SK-N-SH (cell line): ENCODE measurements at regions of chr3 and their contacts with region 1.

Region 1: DNA sequence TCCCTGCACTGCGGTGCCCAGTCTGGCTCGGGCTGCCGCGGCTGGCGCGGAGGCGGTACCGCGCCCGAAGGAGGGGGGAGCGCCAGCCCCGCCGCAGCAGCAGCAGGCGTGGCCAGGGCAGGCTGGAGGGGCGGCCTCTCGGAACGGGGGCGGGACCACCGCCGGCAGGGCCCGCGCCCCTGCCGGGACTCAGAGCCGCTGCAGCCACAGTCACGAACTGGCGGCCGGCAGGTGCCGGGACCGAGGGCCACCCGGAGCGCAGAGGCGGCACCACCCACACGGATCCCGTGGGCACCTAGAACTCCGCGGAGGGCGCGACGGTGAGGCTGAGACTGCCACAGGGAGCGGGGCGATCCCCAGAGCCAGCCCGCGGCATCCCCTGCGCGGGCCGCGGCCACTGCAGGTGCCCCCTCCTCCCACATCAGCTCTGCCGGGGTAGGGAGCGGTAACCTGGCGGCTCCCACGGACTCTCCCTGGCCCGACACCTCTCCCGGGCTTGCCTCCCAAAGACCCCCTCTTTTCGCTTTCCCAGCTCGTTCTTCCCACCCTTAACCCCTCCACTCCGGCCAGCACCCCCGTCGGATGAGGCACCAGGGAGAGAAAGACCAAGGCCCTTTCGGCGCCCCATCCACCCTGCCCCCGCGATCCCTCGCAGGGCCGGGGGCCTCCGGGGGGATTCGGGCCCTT is at the start of gene VWA5B2:
- DNase-seq: peak; percentile 99
- H3K4me3 ChIP-seq: peak within 1 kb of the TSS; percentile 50 to 64
- H3K27ac ChIP-seq: no peak within 1 kb of the TSS
- H3K4me1 ChIP-seq: peaks cover 0 to 26% of the 10 kb centered on the region in 2 experiments; a peak in 2 of 4 replicates
- H3K27me3 ChIP-seq: peaks cover 27% of the 10 kb centered on the region
- CTCF ChIP-seq: peak; percentile 21; the same call in 1 of the 2 replicates
- EP300 ChIP-seq: no peak
- RAD21 ChIP-seq: 0 out of 2 replicates have a peak, but pooled peaks have one; percentile 16
- polyA plus RNA-seq, gene VWA5B2: 0.08 and 0.19 TPM in 2 replicates

Region 2: DNA sequence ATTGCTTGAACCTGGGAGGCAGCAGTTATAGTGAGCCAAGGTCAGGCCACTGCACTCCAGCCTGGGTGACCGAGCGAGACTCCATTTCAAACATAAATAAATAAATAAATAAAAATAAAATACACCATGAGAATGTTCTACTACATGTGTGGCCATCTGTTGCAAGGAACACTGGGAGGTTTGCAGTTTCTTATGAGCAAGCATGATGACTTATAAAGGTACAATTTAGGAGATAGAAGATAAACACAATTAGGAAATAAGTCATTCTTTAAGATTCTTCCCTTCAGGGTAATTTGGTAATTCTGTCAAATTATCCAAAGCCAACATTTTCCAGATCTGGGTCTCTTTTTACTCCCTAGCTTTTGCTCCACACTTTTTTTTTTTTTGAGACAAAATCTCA is 163.3 kb before region 1 on chr3:
- CTCF ChIA-PET with region 1: no interaction called
- POLR2A ChIA-PET with region 1: no interaction called
- DNase-seq: no peak
- H3K4me3 ChIP-seq: no peak overlapping the region
- H3K27ac ChIP-seq: no peak overlapping the region
- H3K4me1 ChIP-seq: no peaks in the 10 kb centered on the region; a peak in 1 of 4 replicates
- H3K27me3 ChIP-seq: no peaks in the 10 kb centered on the region
- CTCF ChIP-seq: no peak
- EP300 ChIP-seq: no peak
- RAD21 ChIP-seq: no peak

Region 3: DNA sequence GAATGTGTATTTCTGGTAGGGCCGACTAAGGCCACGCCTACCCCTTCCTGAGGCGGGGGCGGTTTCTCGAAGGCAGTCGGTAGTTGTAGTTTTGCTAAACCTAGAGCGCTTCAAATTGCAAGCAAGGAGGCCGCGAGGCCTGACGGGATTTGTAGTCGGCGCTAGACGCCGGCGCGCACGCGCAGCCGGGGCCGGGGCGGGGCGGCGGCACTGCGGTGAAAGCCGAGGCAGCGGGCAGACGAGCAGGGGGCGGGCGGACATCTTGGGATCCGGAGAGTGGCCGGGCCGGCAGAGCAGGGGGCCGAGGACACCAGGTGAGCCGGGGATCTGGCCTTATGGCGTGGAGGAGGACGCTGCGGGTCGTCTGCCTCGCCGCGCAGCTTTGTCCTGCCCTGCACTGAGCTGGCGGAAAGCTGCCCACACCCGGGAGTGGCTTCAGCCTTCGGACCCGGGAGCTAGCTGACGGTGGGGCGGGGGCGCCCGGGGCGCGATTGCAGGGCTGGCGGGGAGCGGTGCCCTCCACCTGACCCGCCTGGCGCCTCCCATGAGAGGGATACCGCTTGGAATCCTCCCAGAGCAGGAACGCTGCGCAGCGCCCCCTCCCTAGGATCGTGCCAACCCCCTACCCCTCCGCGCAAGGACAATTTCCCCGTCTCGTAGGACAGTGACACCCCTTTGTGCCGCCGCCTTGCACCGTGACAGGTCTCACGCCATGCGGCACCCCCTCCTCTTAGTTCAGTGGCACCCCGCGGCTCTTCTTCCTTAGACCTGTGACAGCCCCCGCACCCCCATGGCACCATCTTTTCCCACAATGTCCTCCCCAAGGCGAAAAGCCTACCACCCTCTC is 54.7 kb before region 1 on chr3 and contains the start of gene AP2M1:
- CTCF ChIA-PET with region 1: interaction called, 11 read pairs
- POLR2A ChIA-PET with region 1: no interaction called
- DNase-seq: peak; percentile 95
- H3K4me3 ChIP-seq: peak within 1 kb of the TSS; percentile 93 to 96
- H3K27ac ChIP-seq: peak within 1 kb of the TSS; percentile 86 to 87
- H3K4me1 ChIP-seq: peaks cover 25 to 29% of the 10 kb centered on the region in 2 experiments
- H3K27me3 ChIP-seq: no peaks in the 10 kb centered on the region
- CTCF ChIP-seq: peak; percentile 25; the same call in 1 of the 2 replicates
- EP300 ChIP-seq: no peak
- RAD21 ChIP-seq: peak; percentile 7
- polyA plus RNA-seq, gene AP2M1: 645 and 759 TPM in 2 replicates

Region 4: DNA sequence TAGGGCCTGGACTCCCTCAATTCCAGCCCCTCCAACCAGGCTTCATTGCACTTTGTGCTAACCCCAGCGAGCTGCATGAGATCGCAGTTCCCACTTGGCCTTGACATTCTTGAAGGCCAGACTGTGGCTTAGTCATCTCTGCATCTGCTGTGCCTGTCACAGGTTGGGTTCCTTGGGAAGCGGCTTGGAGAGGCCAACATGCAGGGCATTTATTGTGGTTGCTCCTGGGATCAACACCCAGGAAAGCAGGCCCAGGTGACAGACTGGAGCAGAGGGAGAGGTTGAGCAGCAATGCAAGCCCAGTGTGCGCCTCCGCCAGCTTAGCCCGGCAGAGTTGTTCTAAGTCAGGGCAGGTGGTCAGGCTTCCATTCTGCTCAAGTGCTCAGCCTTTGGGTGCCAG is 33.0 kb before region 1 on chr3:
- CTCF ChIA-PET with region 1: interaction called, 15 read pairs
- POLR2A ChIA-PET with region 1: no interaction called
- DNase-seq: no peak
- H3K4me3 ChIP-seq: no peak overlapping the region
- H3K27ac ChIP-seq: no peak overlapping the region
- H3K4me1 ChIP-seq: no peaks in the 10 kb centered on the region
- H3K27me3 ChIP-seq: no peaks in the 10 kb centered on the region
- CTCF ChIP-seq: no peak
- EP300 ChIP-seq: no peak
- RAD21 ChIP-seq: no peak

Region 5: GRCh38 chr3:184209146-184209923 is 20.2 kb before region 1 on chr3:
- CTCF ChIA-PET with region 1: interaction called, 48 read pairs
- POLR2A ChIA-PET with region 1: interaction called, 5 read pairs
- DNase-seq: no peak
- H3K4me3 ChIP-seq: no peak overlapping the region
- H3K27ac ChIP-seq: no peak overlapping the region
- H3K4me1 ChIP-seq: peaks cover 0 to 3% of the 10 kb centered on the region in 2 experiments; a peak in 1 of 4 replicates
- H3K27me3 ChIP-seq: peaks cover 15% of the 10 kb centered on the region
- CTCF ChIP-seq: no peak
- EP300 ChIP-seq: no peak
- RAD21 ChIP-seq: no peak

Region 6: DNA sequence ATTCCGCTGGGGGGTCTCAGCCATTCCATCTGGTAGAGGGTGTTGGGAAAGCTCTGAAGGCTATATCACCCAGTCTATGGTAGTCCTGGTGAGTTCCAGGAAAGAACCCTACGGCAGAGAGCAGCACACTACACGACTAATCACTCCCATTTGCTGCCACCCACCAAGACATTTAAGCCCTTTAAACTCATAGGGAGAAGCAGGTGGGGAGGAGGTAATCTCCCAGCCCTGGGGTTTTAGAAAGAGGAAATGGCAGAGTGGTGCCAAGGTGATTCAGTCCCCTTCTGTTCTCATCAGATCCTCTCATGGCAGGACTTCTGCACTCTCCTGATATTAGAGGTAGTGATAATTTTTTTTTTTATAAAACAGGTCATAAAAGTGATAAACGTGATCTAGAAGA is 10.7 kb before region 1 on chr3:
- CTCF ChIA-PET with region 1: interaction called, 61 read pairs
- POLR2A ChIA-PET with region 1: interaction called, 3 read pairs
- DNase-seq: no peak
- H3K4me3 ChIP-seq: no peak overlapping the region
- H3K27ac ChIP-seq: no peak overlapping the region
- H3K4me1 ChIP-seq: no peaks in the 10 kb centered on the region
- H3K27me3 ChIP-seq: no peaks in the 10 kb centered on the region
- CTCF ChIP-seq: no peak
- EP300 ChIP-seq: no peak
- RAD21 ChIP-seq: no peak

Region 7: DNA sequence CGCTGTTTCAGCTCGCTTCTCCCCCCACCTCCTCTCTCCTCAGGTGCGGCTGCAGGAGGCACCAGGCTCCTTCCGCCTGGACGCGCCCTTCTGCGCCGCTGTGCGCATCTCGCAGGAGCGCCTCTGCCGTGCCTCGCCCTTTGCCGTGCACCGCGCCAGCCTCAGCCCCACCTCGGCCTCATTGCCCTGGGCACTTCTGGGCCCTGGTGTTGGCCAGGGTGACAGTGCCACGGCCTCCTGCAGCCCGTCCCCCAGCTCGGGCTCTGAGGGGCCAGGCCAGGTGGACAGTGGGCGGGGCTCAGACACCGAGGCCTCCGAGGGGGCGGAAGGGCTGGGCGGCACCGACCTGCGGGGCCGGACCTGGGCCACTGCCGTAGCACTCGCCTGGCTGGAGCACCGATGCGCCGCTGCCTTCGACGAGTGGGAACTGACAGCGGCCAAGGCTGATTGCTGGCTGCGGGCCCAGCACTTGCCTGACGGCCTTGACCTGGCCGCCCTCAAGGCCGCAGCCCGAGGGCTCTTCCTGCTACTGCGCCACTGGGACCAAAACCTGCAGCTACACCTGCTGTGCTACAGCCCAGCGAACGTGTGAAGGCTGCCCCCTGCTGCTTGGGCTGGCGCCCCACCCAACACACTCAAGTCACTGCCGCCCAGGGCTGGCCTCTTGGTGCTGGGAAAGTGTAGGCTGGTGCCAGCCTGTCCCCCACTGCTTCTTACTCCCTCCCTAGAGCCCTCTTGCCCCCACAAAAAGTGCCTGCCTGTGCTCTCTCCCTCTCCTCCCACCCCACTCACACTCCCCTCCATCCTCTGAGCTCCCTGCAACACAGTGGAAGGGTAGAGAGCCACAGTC is 12.1 kb after region 1 on chr3:
- CTCF ChIA-PET with region 1: interaction called, 25 read pairs
- POLR2A ChIA-PET with region 1: interaction called, 3 read pairs
- DNase-seq: peak; percentile 61
- H3K4me3 ChIP-seq: no peak overlapping the region
- H3K27ac ChIP-seq: no peak overlapping the region
- H3K4me1 ChIP-seq: no peaks in the 10 kb centered on the region; a peak in 1 of 4 replicates
- H3K27me3 ChIP-seq: no peaks in the 10 kb centered on the region
- CTCF ChIP-seq: peak; percentile 27
- EP300 ChIP-seq: no peak
- RAD21 ChIP-seq: peak; percentile 57